Endothelial cell of umbilical vein (primary cell): ENCODE measurements at regions of chr2 and their contacts with region 1.

Region 1: DNA sequence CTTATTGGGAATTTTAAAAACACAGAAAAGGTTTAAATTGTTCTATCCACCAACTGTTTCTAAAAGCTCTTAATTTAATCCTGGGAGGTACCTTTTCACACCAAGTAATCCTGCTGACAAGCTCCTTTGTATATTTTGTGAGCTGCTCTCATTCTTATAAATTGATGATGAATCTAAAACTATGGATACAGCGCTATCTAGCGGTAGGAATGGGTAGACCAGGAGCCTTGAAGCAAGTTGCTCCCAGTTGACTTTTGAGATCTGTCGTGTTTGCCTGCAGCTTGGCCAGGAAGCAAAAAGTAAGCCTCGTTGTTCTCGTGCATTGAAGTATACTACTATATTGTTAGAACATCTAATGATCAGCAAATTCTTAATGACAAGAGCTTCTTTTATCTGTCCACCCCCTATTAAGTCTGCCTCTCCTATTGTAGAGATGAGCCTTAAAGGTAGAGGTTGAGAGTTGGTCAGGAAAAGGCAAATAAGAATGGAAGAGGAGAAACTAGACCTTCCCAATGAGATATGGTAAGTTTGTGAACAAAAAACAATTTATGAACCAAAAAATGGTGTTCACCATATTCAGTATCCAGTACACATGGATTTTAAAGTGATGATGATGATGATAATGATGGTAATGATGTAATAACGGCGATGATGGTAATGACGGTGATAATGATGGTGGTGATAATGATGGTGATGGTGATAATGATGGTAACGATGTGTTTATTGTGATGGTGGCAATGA is 212.0 kb upstream of the NCKAP5 start:
- DNase-seq: peak; percentile 90
- H3K4me3 ChIP-seq: no peak overlapping the region
- H3K27ac ChIP-seq: no peak overlapping the region
- H3K4me1 ChIP-seq: peaks cover 3% of the 10 kb centered on the region
- H3K27me3 ChIP-seq: no peaks in the 10 kb centered on the region
- CTCF ChIP-seq: peak; percentile 73
- POLR2A ChIP-seq: no peak

Region 2: GRCh38 chr2:132547074-132547687 is 1233.1 kb before region 1 on chr2:
- CTCF ChIA-PET with region 1: interaction called, 49 read pairs
- POLR2A ChIA-PET with region 1: no interaction called
- dilution Hi-C with region 1: no loop called
- intact Hi-C with region 1: loop called (anchors 1 kb)
- DNase-seq: peak; percentile 56
- H3K4me3 ChIP-seq: no peak overlapping the region
- H3K27ac ChIP-seq: no peak overlapping the region
- H3K4me1 ChIP-seq: no peaks in the 10 kb centered on the region
- H3K27me3 ChIP-seq: no peaks in the 10 kb centered on the region
- CTCF ChIP-seq: peak; percentile 53 to 58
- POLR2A ChIP-seq: no peak

Region 3: GRCh38 chr2:132766573-132766972 is 1013.7 kb before region 1 on chr2:
- CTCF ChIA-PET with region 1: no interaction called
- POLR2A ChIA-PET with region 1: no interaction called
- dilution Hi-C with region 1: no loop called
- intact Hi-C with region 1: no loop called
- DNase-seq: no peak
- H3K4me3 ChIP-seq: no peak overlapping the region
- H3K27ac ChIP-seq: no peak overlapping the region
- H3K4me1 ChIP-seq: no peaks in the 10 kb centered on the region
- H3K27me3 ChIP-seq: no peaks in the 10 kb centered on the region
- CTCF ChIP-seq: no peak
- POLR2A ChIP-seq: no peak

Region 4: DNA sequence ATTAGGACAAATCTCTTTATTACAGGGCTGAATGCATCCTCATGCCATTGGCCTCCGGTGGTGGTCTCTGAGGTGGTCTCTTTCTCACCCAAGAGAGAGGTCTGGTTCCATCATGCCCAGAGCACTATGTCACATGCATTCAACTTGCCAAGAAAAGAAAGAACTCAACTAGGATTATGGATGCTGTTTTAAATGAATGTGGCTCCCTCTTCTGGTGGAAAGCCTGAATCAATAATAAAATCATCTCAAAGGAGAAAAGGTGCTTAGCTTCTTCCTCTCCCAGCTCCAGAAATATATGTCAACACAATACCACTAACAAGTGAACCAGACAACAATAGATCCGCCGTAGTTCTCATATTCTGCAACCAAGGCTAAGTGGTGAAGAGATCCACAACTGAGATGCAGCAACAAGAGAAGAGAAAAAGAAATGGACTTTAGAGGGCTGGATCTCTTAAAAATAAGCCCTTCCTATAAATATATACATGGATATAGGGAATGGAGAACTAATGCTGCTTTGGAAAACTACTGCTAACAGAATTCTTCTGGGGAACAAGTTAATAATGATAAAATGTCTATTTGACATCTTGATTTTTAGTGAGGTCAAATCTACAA is 608.8 kb before region 1 on chr2:
- CTCF ChIA-PET with region 1: interaction called, 60 read pairs
- POLR2A ChIA-PET with region 1: no interaction called
- dilution Hi-C with region 1: no loop called
- intact Hi-C with region 1: loop called (anchors 1 kb)
- DNase-seq: peak; percentile 79
- H3K4me3 ChIP-seq: no peak overlapping the region
- H3K27ac ChIP-seq: no peak overlapping the region
- H3K4me1 ChIP-seq: no peaks in the 10 kb centered on the region
- H3K27me3 ChIP-seq: peaks cover 2% of the 10 kb centered on the region in 2 experiments
- CTCF ChIP-seq: peak; percentile 48 to 58
- POLR2A ChIP-seq: no peak

Region 5: DNA sequence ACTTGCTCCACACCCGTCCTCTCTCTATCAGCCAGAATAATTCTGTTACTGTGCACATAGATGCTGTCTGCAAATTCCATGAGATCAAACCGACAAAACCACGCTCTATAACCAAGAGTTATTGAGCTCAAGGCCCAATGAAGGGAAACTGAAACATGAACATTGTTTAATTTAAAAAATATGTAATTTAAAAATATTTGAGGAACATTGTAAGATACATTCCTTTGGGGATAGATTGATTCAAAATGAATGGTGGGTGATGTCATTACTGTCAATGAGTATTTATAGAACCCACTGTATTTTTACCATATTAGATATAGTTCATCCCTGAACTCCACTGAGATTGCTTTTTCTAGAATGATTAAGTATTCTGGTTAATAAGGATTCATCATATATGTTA is 262.4 kb before region 1 on chr2:
- CTCF ChIA-PET with region 1: interaction called, 81 read pairs
- POLR2A ChIA-PET with region 1: no interaction called
- dilution Hi-C with region 1: no loop called
- intact Hi-C with region 1: loop called (anchors 1 kb)
- DNase-seq: no peak
- H3K4me3 ChIP-seq: no peak overlapping the region
- H3K27ac ChIP-seq: no peak overlapping the region
- H3K4me1 ChIP-seq: no peaks in the 10 kb centered on the region
- H3K27me3 ChIP-seq: peaks cover 0 to 1% of the 10 kb centered on the region in 2 experiments
- CTCF ChIP-seq: no peak
- POLR2A ChIP-seq: no peak

Region 6: GRCh38 chr2:133579274-133579673 is 201.0 kb before region 1 on chr2:
- CTCF ChIA-PET with region 1: interaction called, 5 read pairs
- POLR2A ChIA-PET with region 1: no interaction called
- dilution Hi-C with region 1: no loop called
- intact Hi-C with region 1: loop called (anchors 2 kb)
- DNase-seq: peak; percentile 93
- H3K4me3 ChIP-seq: no peak overlapping the region
- H3K27ac ChIP-seq: peak overlapping the region; percentile 45
- H3K4me1 ChIP-seq: peaks cover 40% of the 10 kb centered on the region
- H3K27me3 ChIP-seq: no peaks in the 10 kb centered on the region
- CTCF ChIP-seq: no peak
- POLR2A ChIP-seq: peak; percentile 27

Region 7: GRCh38 chr2:133768662-133769435 is 11.4 kb before region 1 on chr2:
- CTCF ChIA-PET with region 1: interaction called, 10 read pairs
- POLR2A ChIA-PET with region 1: no interaction called
- dilution Hi-C with region 1: no loop called
- intact Hi-C with region 1: no loop called
- DNase-seq: no peak
- H3K4me3 ChIP-seq: no peak overlapping the region
- H3K27ac ChIP-seq: no peak overlapping the region
- H3K4me1 ChIP-seq: no peaks in the 10 kb centered on the region
- H3K27me3 ChIP-seq: no peaks in the 10 kb centered on the region
- CTCF ChIP-seq: no peak
- POLR2A ChIP-seq: no peak